ENCODE measurements at regions of chr1 and their contacts with region 1.

Region 1: DNA sequence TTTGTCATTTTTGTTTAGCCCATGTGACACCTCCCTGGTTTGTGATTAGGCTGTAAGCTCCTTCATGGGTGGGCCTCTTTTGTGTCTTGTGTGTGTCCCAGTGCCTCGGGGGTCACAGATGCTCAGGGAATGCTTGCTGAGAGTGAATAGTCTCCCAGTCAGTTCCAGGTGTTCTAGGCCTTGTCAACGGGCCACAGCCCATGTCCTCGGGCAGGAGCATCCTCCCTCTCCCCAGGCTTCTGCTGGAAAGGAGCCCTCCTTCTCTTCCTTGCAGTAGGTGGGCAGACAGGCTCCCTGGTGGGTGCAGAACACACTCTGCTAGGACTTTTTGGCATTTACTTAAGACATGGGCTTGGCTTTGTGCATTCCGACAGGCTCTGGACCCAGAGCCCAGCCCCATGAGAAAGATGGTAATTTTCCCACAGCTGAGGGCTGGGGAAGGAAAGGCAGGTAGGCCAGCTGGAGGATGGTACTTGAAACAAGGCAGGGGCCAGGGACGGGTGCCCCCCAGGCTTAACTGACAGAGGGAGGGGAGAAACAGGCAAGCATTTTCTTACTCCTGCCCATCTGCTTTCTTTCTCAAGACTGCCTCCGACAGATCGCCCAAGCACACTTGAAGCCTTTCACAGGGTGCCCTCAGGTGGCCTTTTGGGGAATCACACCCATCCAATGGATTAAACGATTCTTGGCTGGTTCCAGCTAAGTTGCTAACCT is 7.1 kb upstream of the CPLANE2 start:
- DNase-seq: peak; percentile 55 to 79
- ATAC-seq: peak in 1 of 2 donors; percentile 44
- H3K4me3 ChIP-seq: no peak overlapping the region
- H3K27ac ChIP-seq: peak overlapping the region in 1 of 4 donors; percentile 40
- H3K4me1 ChIP-seq: peaks cover 26 to 27% of the 10 kb centered on the region in 2 donors
- H3K27me3 ChIP-seq: no peaks in the 10 kb centered on the region
- CTCF ChIP-seq: peak; percentile 77 to 88 (median 83)
- POLR2A ChIP-seq: no peak

Region 2: GRCh38 chr1:16048573-16049189 is 195.4 kb before region 1 on chr1:
- in situ Hi-C with region 1: no loop called
- intact Hi-C with region 1: no loop called
- DNase-seq: no peak
- ATAC-seq: peak; percentile 17 to 22
- H3K4me3 ChIP-seq: peak overlapping the region; percentile 18 to 45 (median 35)
- H3K27ac ChIP-seq: no peak overlapping the region
- H3K4me1 ChIP-seq: peaks cover 0 to 4% of the 10 kb centered on the region in 2 donors
- H3K27me3 ChIP-seq: no peaks in the 10 kb centered on the region
- CTCF ChIP-seq: no peak
- POLR2A ChIP-seq: no peak

Region 3: GRCh38 chr1:16078925-16079656 is 165.0 kb before region 1 on chr1:
- in situ Hi-C with region 1: no loop called
- intact Hi-C with region 1: loop called (anchors 2 kb)
- DNase-seq: peak; percentile 39 to 59
- ATAC-seq: peak; percentile 60 to 62
- H3K4me3 ChIP-seq: peak overlapping the region in 1 of 4 donors; percentile 47
- H3K27ac ChIP-seq: no peak overlapping the region
- H3K4me1 ChIP-seq: peaks cover 3 to 12% of the 10 kb centered on the region in 2 donors
- H3K27me3 ChIP-seq: no peaks in the 10 kb centered on the region
- CTCF ChIP-seq: peak; percentile 79 to 89 (median 86)
- POLR2A ChIP-seq: no peak

Region 4: GRCh38 chr1:16187748-16188401 is 56.2 kb before region 1 on chr1:
- in situ Hi-C with region 1: no loop called
- intact Hi-C with region 1: loop called (anchors 5 kb)
- DNase-seq: peak in 1 of 2 donors; percentile 50
- ATAC-seq: peak; percentile 24 to 67
- H3K4me3 ChIP-seq: no peak overlapping the region
- H3K27ac ChIP-seq: no peak overlapping the region
- H3K4me1 ChIP-seq: no peaks in the 10 kb centered on the region
- H3K27me3 ChIP-seq: peaks cover 0 to 5% (median 4%) of the 10 kb centered on the region in 3 donors
- CTCF ChIP-seq: peak; percentile 87 to 98 (median 95)
- POLR2A ChIP-seq: no peak

Region 5: GRCh38 chr1:16206547-16207317 is 37.4 kb before region 1 on chr1:
- in situ Hi-C with region 1: no loop called
- intact Hi-C with region 1: loop called (anchors 1 kb)
- DNase-seq: peak; percentile 90 to 94
- ATAC-seq: peak; percentile 94 to 96
- H3K4me3 ChIP-seq: peak overlapping the region; percentile 48 to 71 (median 64)
- H3K27ac ChIP-seq: peak overlapping the region; percentile 59 to 82 (median 72)
- H3K4me1 ChIP-seq: peaks cover 4 to 6% of the 10 kb centered on the region in 2 donors
- H3K27me3 ChIP-seq: peaks cover 6 to 9% (median 6%) of the 10 kb centered on the region in 3 donors
- CTCF ChIP-seq: peak in 1 of 5 experiments; percentile 1
- POLR2A ChIP-seq: peak; percentile 28 to 43

Region 6: DNA sequence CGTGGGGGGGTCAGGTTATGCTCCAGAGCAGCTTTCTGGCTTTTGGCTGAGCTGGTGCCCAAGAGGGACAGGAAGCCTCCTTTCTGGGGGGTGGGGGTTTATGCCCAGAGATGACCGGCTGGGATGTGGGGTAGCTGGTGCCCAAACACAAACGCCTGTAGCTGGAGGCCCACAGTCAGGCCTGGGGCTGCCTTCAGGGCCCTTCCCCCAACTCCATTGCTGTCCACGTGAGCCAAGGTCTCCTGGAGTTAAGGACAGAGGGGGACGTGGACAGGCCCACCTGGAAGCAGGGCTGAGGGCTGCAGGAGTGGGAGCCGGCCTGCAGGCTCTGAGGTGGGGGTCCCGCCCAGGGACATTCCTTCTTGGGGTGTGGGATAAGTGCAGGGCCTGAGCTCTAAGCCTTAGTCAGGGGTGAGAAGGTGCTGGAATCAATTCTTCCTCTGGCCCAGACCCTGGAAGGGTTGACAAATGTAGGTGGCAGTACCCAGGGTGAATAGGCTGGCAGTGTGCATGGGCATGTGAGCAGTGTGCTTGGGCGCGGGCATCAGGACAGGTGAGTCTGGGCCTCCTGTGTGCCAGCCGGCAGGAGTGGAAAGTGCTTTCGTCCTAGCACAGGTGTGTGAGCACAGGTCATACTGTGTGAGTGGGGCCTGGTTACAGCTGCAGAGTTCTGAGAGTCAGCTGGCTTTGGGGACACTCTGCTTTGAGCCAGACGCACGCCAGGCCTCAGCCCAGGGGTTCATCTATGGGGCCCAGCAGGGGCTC is 13.9 kb before region 1 on chr1:
- in situ Hi-C with region 1: no loop called
- intact Hi-C with region 1: loop called (anchors 1 kb)
- DNase-seq: no peak
- ATAC-seq: no peak
- H3K4me3 ChIP-seq: no peak overlapping the region
- H3K27ac ChIP-seq: no peak overlapping the region
- H3K4me1 ChIP-seq: peaks cover 0 to 8% of the 10 kb centered on the region in 2 donors
- H3K27me3 ChIP-seq: peaks cover 17 to 29% (median 24%) of the 10 kb centered on the region in 3 donors
- CTCF ChIP-seq: no peak
- POLR2A ChIP-seq: no peak